Activated CD4-positive, alpha-beta T cell treated with anti-CD3 and anti-CD28 coated beads for 36 hours (primary cell): ENCODE measurements at regions of chr16 and their contacts with region 1.

Region 1: GRCh38 chr16:14632692-14633569 is at the start of gene BFAR:
- DNase-seq: peak; percentile 100
- ATAC-seq: peak; percentile 78
- H3K4me3 Mint-ChIP-seq: peak within 1 kb of the TSS; percentile 97
- H3K27ac Mint-ChIP-seq: peak within 1 kb of the TSS; percentile 99
- H3K4me1 Mint-ChIP-seq: peaks cover 51% of the 10 kb centered on the region
- H3K27me3 Mint-ChIP-seq: no peaks in the 10 kb centered on the region
- total RNA-seq, gene BFAR: 54.8 to 57.5 TPM

Region 2: GRCh38 chr16:14285513-14286385 is 347.2 kb before region 1 on chr16:
- CTCF ChIA-PET with region 1: no interaction called
- POLR2A ChIA-PET with region 1: no interaction called
- intact Hi-C with region 1: loop called in 1 of 2 experiments (anchors 1 kb)
- DNase-seq: peak; percentile 95
- ATAC-seq: peak; percentile 78
- H3K4me3 Mint-ChIP-seq: peak overlapping the region; percentile 80
- H3K27ac Mint-ChIP-seq: peak overlapping the region; percentile 84
- H3K4me1 Mint-ChIP-seq: peaks cover 13% of the 10 kb centered on the region
- H3K27me3 Mint-ChIP-seq: no peaks in the 10 kb centered on the region

Region 3: GRCh38 chr16:14354551-14355351 is 278.2 kb before region 1 on chr16:
- CTCF ChIA-PET with region 1: no interaction called
- POLR2A ChIA-PET with region 1: no interaction called
- intact Hi-C with region 1: loop called in 1 of 2 experiments (anchors 2 kb)
- DNase-seq: peak; percentile 74
- ATAC-seq: peak; percentile 94
- H3K4me3 Mint-ChIP-seq: peak overlapping the region; percentile 21
- H3K27ac Mint-ChIP-seq: no peak overlapping the region
- H3K4me1 Mint-ChIP-seq: peaks cover 10% of the 10 kb centered on the region
- H3K27me3 Mint-ChIP-seq: peaks cover 10% of the 10 kb centered on the region

Region 4: GRCh38 chr16:14658063-14658462 is 25.1 kb after region 1 on chr16:
- CTCF ChIA-PET with region 1: no interaction called
- POLR2A ChIA-PET with region 1: no interaction called
- intact Hi-C with region 1: no loop called
- DNase-seq: peak; percentile 7
- ATAC-seq: peak; percentile 44
- H3K4me3 Mint-ChIP-seq: no peak overlapping the region
- H3K27ac Mint-ChIP-seq: peak overlapping the region; percentile 7
- H3K4me1 Mint-ChIP-seq: peaks cover 5% of the 10 kb centered on the region
- H3K27me3 Mint-ChIP-seq: no peaks in the 10 kb centered on the region

Region 5: GRCh38 chr16:15146091-15146662 is 513.2 kb after region 1 on chr16:
- CTCF ChIA-PET with region 1: no interaction called
- POLR2A ChIA-PET with region 1: no interaction called
- intact Hi-C with region 1: loop called in 1 of 2 experiments (anchors 5 kb)
- DNase-seq: no peak
- ATAC-seq: no peak
- H3K4me3 Mint-ChIP-seq: no peak overlapping the region
- H3K27ac Mint-ChIP-seq: no peak overlapping the region
- H3K4me1 Mint-ChIP-seq: peaks cover 11% of the 10 kb centered on the region
- H3K27me3 Mint-ChIP-seq: no peaks in the 10 kb centered on the region

Region 6: GRCh38 chr16:15888072-15888976 is 1255.4 kb after region 1 on chr16 and contains the start of gene CEP20:
- CTCF ChIA-PET with region 1: no interaction called
- POLR2A ChIA-PET with region 1: no interaction called
- intact Hi-C with region 1: loop called in 1 of 2 experiments (anchors 5 kb)
- DNase-seq: peak; percentile 100
- ATAC-seq: peak; percentile 99
- H3K4me3 Mint-ChIP-seq: peak within 1 kb of the TSS; percentile 92
- H3K27ac Mint-ChIP-seq: peak within 1 kb of the TSS; percentile 99
- H3K4me1 Mint-ChIP-seq: peaks cover 28% of the 10 kb centered on the region
- H3K27me3 Mint-ChIP-seq: no peaks in the 10 kb centered on the region
- total RNA-seq, gene CEP20: 39.3 to 51.0 TPM